MCF 10A (cell line): ENCODE measurements at regions of chr1 and their contacts with region 1.

Region 1: GRCh38 chr1:198481661-198482060 is 58.8 kb downstream of the ATP6V1G3 start:
- DNase-seq: no peak
- H3K4me3 Mint-ChIP-seq: no peak overlapping the region
- H3K27ac Mint-ChIP-seq: no peak overlapping the region
- H3K4me1 Mint-ChIP-seq: peaks cover 6% of the 10 kb centered on the region
- H3K27me3 Mint-ChIP-seq: no peaks in the 10 kb centered on the region
- CTCF ChIP-seq: no peak

Region 2: DNA sequence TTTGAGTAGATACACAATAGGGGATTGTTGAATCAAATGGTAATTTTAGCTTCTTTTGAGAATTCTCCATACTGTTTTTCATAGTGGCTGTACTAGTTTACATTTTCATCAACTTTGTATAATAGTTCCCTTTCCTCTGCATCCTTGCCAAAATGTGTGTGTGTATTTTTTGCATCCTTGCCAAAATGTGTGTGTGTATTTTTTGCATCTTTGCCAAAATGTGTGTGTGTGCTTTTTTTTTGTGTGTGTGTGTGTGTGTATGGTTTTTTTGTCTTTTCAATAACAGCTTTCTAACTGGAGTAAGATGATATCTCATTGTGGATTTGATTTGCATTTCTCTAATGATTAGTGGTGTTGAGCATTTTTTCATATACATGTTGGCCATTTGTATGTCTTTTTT is 46.6 kb before region 1 on chr1:
- CTCF ChIA-PET with region 1: no interaction called
- POLR2A ChIA-PET with region 1: no interaction called
- intact Hi-C with region 1: loop called (anchors 1 kb)
- DNase-seq: no peak
- H3K4me3 Mint-ChIP-seq: no peak overlapping the region
- H3K27ac Mint-ChIP-seq: no peak overlapping the region
- H3K4me1 Mint-ChIP-seq: peaks cover 17% of the 10 kb centered on the region
- H3K27me3 Mint-ChIP-seq: no peaks in the 10 kb centered on the region
- CTCF ChIP-seq: no peak

Region 3: DNA sequence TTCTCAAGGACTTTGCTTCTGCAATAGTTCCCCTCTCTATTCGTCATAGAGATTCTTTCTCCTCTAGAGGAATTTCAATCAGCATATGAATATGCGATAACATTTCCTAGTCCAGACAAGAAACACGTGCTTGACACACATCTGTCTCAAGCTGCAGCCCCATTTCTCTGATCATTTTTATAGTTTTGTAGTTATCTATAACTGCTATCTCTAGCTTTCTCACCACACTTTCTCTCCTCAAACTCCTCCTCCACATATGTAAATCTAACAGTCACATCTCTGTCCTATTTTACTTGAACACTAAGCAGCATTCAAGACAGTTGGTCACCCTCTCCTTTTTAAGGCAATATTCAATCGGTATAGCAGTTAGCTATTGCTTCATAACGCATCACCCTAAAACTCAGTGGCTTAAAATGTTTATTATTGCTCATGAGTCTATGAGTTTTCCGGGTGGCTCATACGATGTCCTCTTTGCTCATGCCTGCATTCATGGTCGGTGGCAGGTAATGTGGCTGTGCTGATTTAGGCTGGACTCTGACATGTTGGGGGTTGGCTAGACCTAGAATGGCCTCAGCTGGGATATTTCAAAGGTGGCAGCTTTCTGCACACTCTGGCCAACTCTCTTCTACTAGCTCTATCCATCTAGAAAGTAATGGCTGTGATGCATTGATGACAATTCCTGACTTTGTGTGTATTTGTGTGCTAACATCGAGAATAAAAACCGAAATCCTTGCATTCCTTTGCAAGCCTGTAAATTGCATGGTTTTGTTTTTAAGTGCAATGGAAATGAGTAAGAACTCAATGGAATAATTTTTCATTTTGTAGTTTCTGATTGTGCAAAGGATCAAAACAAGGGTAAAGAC is 38.2 kb after region 1 on chr1:
- CTCF ChIA-PET with region 1: no interaction called
- POLR2A ChIA-PET with region 1: no interaction called
- intact Hi-C with region 1: loop called (anchors 1 kb)
- DNase-seq: no peak
- H3K4me3 Mint-ChIP-seq: no peak overlapping the region
- H3K27ac Mint-ChIP-seq: no peak overlapping the region
- H3K4me1 Mint-ChIP-seq: peaks cover 20% of the 10 kb centered on the region
- H3K27me3 Mint-ChIP-seq: no peaks in the 10 kb centered on the region
- CTCF ChIP-seq: no peak